T-cell (primary cell): ENCODE measurements at regions of chr10 and their contacts with region 1.

Region 1: GRCh38 chr10:114304017-114304570 is 65.0 kb downstream of the VWA2 start:
- DNase-seq: peak in 32 of 35 experiments; percentile 20 to 77 (median 50)
- ATAC-seq: peak; percentile 28 to 56 (median 45)
- H3K4me3 ChIP-seq: peak overlapping the region; percentile 71 to 84
- H3K4me3 Mint-ChIP-seq: peak overlapping the region; percentile 77 to 91 (median 83)
- H3K27ac ChIP-seq: peak overlapping the region; percentile 44
- H3K27ac Mint-ChIP-seq: peak overlapping the region; percentile 47 to 60
- H3K4me1 ChIP-seq: peaks cover 0 to 16% of the 10 kb centered on the region in 2 experiments
- H3K4me1 Mint-ChIP-seq: peaks cover 10 to 12% (median 12%) of the 10 kb centered on the region in 3 donors
- H3K27me3 ChIP-seq: no peaks in the 10 kb centered on the region
- H3K27me3 Mint-ChIP-seq: no peaks in the 10 kb centered on the region

Region 2: DNA sequence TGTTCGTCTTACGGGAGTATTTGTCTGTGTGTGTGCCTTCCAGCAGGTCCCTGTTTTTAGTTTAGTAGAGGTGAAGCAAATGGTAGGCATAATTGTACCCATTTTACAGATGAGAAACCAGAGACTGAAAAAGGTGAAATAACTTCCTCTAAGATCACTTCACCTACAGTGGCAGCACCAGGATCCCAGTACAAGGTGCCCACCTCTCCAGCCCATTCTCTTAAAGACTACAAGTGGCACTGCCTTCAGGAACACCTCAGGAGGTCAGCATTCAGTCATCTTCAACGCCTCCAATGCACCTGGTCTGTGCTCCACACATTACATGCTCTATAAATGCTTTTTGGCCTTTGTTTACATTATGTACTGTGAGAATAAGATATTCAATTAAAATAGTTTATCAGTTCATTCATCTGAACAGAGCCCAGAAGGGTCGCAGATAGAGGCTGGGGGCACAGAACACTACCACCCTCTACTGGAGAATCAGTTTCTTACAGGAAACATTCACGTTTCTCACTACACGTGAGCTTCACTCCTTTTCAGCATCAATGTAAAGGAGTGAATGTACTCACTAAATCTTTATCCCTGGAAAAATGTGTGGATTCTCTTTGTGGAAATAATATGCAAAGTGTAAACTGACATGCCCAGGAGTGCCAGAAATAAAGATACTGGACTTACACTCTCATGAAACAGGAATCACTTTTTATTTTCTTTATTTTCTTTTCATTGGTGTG is 399.4 kb after region 1 on chr10:
- CTCF ChIA-PET with region 1: interaction called, 12 to 16 read pairs
- POLR2A ChIA-PET with region 1: no interaction called
- DNase-seq: peak in 16 of 35 experiments; percentile 2 to 55 (median 10)
- ATAC-seq: peak; percentile 38 to 57 (median 44)
- H3K4me3 ChIP-seq: no peak overlapping the region
- H3K4me3 Mint-ChIP-seq: no peak overlapping the region
- H3K27ac ChIP-seq: no peak overlapping the region
- H3K27ac Mint-ChIP-seq: no peak overlapping the region
- H3K4me1 ChIP-seq: no peaks in the 10 kb centered on the region
- H3K4me1 Mint-ChIP-seq: no peaks in the 10 kb centered on the region
- H3K27me3 ChIP-seq: peaks cover 0 to 3% of the 10 kb centered on the region in 2 experiments
- H3K27me3 Mint-ChIP-seq: peaks cover 0 to 18% of the 10 kb centered on the region in 2 donors

Region 3: GRCh38 chr10:114779803-114780609 is 475.9 kb after region 1 on chr10:
- CTCF ChIA-PET with region 1: interaction called, 3 to 31 read pairs
- POLR2A ChIA-PET with region 1: interaction called in 1 of 2 experiments, 5 read pairs
- DNase-seq: no peak
- ATAC-seq: no peak
- H3K4me3 ChIP-seq: no peak overlapping the region
- H3K4me3 Mint-ChIP-seq: no peak overlapping the region
- H3K27ac ChIP-seq: no peak overlapping the region
- H3K27ac Mint-ChIP-seq: no peak overlapping the region
- H3K4me1 ChIP-seq: no peaks in the 10 kb centered on the region
- H3K4me1 Mint-ChIP-seq: no peaks in the 10 kb centered on the region
- H3K27me3 ChIP-seq: no peaks in the 10 kb centered on the region
- H3K27me3 Mint-ChIP-seq: peaks cover 0 to 12% of the 10 kb centered on the region in 2 donors

Region 4: DNA sequence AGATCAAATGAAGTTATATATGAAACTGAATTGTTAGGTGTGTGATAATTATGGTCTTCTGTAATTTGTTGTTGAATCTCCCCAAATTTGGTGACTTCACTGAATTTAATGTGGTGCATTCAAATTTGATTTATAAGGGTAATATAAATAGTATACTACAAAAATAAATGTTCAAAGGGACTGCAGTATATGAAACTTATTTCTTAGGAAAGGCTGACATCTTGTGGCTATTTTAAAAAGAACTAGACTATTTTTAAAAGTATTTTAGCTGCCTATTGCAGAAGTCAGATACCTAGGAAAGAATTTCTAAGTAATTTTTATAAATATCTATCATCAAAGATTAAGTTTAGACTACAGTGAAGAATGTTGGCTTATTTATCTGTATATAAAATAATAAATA is 825.7 kb after region 1 on chr10:
- CTCF ChIA-PET with region 1: interaction called, 6 to 12 read pairs
- POLR2A ChIA-PET with region 1: no interaction called
- DNase-seq: peak in 1 of 35 experiments; percentile 40
- ATAC-seq: no peak
- H3K4me3 ChIP-seq: no peak overlapping the region
- H3K4me3 Mint-ChIP-seq: no peak overlapping the region
- H3K27ac ChIP-seq: no peak overlapping the region
- H3K27ac Mint-ChIP-seq: no peak overlapping the region
- H3K4me1 ChIP-seq: no peaks in the 10 kb centered on the region
- H3K4me1 Mint-ChIP-seq: no peaks in the 10 kb centered on the region
- H3K27me3 ChIP-seq: no peaks in the 10 kb centered on the region
- H3K27me3 Mint-ChIP-seq: peaks cover 0 to 15% of the 10 kb centered on the region in 2 donors